ENCODE measurements at regions of chr3 and their contacts with region 1.

Region 1: DNA sequence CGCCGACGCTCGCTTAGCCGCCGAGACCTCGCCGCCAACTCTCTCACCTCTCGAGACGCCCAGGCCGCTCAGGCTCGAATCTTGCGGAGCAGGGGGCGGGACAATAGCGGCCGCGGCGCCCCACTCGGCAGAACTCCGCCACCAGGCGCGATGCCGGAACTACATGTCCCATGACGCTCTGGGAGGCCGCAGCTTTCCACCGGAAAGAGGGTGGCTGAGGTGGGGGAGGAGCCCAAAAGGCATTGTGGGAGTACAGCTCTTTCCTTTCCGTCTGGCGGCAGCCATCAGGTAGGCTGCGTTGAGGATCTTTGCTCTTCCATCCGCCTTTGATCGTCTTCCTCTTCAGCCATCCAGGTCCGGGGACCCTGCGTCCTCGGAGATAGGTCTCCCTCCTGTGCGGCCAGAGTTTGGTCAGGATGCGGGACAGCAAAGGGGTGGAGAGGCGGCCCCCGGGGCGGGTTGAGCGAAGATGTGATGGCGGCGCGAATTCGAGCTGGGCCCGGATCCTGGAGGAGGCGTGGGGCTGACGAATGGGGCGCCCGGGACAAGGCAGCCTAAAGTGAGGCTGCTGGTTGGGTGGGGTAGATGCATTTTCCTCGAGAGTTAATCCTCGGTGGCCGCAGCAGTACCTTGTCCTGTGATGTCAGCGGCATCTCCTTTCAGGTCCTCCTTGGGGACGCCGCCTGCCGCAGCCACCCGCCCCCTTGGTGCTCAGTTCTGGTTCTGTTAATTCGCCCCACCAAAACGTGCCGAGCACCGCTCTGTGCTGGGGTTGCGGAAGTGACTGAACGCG is at the starts of genes NKIRAS1 and RPL15:
- DNase-seq: peak; percentile 93
- ATAC-seq: peak; percentile 92
- H3K4me3 Mint-ChIP-seq: peak within 1 kb of the TSS; percentile 87
- H3K27ac Mint-ChIP-seq: peak within 1 kb of the TSS; percentile 97
- H3K4me1 Mint-ChIP-seq: peaks cover 35% of the 10 kb centered on the region
- H3K27me3 Mint-ChIP-seq: no peaks in the 10 kb centered on the region
- total RNA-seq, gene NKIRAS1: 3.8 to 4.9 TPM
- total RNA-seq, gene RPL15: 1,577 to 1,648 TPM

Region 2: DNA sequence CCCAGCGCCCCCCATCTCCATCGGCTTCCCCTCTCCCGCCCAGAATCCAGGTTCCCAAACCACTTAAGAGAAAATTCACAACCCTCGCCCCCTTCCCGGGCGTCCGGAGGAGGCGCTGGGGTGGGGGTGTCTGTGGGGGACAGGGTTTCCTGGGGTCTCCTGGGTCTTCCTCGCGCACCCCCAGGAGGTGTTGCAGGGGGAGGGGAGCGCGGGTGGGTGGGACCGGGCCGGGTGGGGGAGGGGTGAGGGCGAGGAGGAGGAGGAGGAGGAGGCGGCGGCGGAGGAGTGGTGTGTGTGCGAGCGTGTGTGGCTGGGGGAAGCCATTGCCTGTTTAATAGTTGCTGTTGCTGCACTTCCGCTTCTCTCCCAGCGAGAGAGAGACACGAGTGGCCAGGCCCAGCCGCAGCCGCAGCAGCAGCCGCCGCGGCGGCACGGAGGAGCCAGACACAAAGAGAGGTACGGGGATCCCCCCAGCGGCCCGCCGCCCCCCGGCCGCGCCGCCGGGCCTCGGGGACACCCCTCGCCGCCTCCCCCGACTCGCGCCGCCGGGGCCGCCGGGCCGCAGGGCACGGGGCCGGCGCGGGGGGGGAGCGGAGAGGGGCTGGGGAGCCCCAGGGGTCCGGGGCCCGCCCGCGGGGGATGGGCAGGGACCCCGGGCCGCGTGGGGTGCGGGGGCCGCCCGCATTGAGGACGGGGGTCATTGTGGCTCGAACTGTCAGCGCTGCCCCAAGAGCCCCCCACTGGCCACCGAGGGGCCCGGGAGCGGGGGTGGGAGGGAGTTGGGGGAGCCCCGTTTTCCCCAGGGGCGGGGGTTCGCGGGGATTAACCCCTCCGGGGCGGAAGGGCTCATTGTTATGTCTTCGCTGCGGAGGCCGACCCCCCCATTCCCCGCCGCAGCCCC is 111.2 kb before region 1 on chr3 and contains the start of gene UBE2E1:
- POLR2A ChIA-PET with region 1: interaction called, 41 read pairs
- DNase-seq: peak; percentile 78
- ATAC-seq: peak; percentile 75
- H3K4me3 Mint-ChIP-seq: peak within 1 kb of the TSS; percentile 96
- H3K27ac Mint-ChIP-seq: peak within 1 kb of the TSS; percentile 96
- H3K4me1 Mint-ChIP-seq: peaks cover 32% of the 10 kb centered on the region
- H3K27me3 Mint-ChIP-seq: peaks cover 29% of the 10 kb centered on the region
- total RNA-seq, gene UBE2E1: 61.7 to 67.9 TPM

Region 3: GRCh38 chr3:23888617-23889228 is 28.4 kb before region 1 on chr3:
- POLR2A ChIA-PET with region 1: interaction called, 11 read pairs
- DNase-seq: no peak
- ATAC-seq: no peak
- H3K4me3 Mint-ChIP-seq: no peak overlapping the region
- H3K27ac Mint-ChIP-seq: no peak overlapping the region
- H3K4me1 Mint-ChIP-seq: peaks cover 4% of the 10 kb centered on the region
- H3K27me3 Mint-ChIP-seq: no peaks in the 10 kb centered on the region

Region 4: DNA sequence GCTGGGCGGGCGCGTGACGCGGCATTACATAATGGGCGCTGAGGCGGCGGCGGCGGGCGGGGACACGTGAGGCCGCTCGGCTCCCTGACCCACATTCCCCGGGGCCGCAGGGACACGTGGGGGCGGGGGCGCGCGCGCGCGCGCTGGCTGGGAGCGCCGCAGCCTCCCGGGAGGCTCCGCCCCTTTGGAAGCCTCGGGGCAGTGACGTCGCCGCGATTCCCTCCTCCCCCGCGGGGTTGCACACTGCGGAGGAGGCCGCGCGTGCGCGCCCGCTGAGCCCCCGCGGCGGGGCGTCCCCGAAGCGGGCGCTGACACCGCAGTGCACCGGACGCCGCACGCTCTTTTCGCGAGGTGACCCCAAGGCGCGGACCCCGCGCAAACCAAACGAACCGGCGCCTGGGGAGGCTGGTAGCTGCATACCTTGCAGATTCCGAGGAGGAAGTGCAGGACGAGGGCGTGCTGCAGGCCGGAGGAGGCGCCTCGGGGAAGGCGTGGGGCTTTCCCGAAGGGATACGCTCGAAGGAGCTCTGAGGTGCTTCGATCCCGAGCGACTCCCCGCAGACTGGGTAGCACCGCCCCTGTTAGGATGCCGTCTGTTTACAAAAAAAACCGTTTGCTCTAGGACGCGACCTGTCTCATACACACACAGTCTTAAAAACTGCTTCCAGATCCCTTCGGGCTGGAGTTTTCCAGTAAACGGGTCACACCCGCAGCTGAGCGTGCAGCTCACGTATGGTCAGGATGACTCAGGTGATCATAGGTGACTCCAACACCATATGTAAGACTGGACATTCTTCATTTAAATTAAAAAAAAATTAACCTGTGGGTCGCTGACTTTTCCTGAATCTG is 29.0 kb after region 1 on chr3:
- POLR2A ChIA-PET with region 1: interaction called, 45 read pairs
- DNase-seq: peak; percentile 95
- ATAC-seq: peak; percentile 79
- H3K4me3 Mint-ChIP-seq: peak overlapping the region; percentile 83
- H3K27ac Mint-ChIP-seq: peak overlapping the region; percentile 90
- H3K4me1 Mint-ChIP-seq: peaks cover 24% of the 10 kb centered on the region
- H3K27me3 Mint-ChIP-seq: peaks cover 21% of the 10 kb centered on the region

Region 5: GRCh38 chr3:23968463-23969184 is 51.5 kb after region 1 on chr3:
- POLR2A ChIA-PET with region 1: no interaction called
- DNase-seq: no peak
- ATAC-seq: no peak
- H3K4me3 Mint-ChIP-seq: no peak overlapping the region
- H3K27ac Mint-ChIP-seq: no peak overlapping the region
- H3K4me1 Mint-ChIP-seq: no peaks in the 10 kb centered on the region
- H3K27me3 Mint-ChIP-seq: no peaks in the 10 kb centered on the region

Region 6: DNA sequence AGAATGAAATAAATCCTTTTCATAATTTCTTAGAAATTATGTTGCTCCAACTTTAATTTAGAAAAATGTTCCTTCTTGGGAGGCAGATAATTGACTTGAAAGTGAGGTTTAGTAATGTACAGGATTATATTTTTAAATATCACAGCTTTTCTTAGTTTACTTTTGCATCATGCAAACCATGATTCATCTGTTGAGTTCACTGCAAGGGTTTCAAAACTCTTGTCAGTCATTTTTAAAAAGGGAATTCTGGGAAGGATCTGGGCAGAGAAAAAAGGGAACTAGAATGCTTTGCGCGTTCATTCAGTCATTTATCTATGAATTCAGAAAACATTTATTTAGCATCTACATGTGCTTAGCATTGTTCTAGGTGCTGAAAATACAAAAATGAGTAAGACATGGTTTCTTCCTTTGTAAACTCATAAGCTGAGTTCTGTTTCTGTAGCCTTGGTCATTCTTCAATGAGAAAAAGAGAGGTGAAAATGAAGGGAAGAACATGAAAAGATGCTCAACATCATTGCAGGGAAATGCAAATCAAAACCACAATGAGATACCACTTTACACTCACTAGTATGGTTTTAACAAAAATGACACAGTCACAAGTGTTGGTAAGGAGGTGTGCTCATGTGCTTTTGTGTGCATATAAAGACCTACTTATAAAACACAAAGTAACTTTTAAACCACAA is 237.1 kb after region 1 on chr3:
- POLR2A ChIA-PET with region 1: no interaction called
- DNase-seq: no peak
- ATAC-seq: no peak
- H3K4me3 Mint-ChIP-seq: no peak overlapping the region
- H3K27ac Mint-ChIP-seq: no peak overlapping the region
- H3K4me1 Mint-ChIP-seq: peaks cover 2% of the 10 kb centered on the region
- H3K27me3 Mint-ChIP-seq: peaks cover 12% of the 10 kb centered on the region

Measured in activated naive CD8-positive, alpha-beta T cell treated with anti-CD3 and anti-CD28 coated beads, Interleukin-2, amount 10 ng/mL, durations not matched to agents 7 days and 5 days (primary cell).